MCF 10A (cell line): ENCODE measurements at regions of chr10 and their contacts with region 1.

Region 1: DNA sequence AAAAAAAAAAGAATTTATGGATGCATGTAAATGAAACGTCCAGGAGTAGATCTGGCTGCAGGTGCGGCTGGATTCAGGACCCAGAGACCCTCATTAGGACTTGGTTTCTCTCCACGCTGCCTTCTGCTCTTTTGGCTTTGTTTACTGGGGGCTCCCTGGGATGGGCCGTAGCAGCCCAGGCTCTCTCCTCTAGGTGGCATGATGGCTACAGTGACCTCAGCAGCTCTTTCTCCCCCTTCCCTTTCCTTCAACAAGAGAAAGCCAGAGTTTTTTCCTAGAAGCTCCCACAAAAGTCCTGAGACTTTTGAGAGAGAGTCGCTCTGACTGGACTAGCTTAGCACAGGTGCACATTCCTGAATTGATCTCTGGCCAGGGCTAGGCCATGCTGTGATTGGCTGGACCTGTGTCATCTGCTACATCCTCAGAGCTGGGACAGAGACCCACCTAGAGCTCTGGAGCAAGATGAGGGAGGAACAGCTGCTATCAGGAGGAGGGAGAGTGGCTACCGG is 67.8 kb upstream of the PDCD4 start:
- DNase-seq: peak; percentile 61
- H3K4me3 Mint-ChIP-seq: no peak overlapping the region
- H3K27ac Mint-ChIP-seq: no peak overlapping the region
- H3K4me1 Mint-ChIP-seq: peaks cover 32% of the 10 kb centered on the region
- H3K27me3 Mint-ChIP-seq: no peaks in the 10 kb centered on the region
- CTCF ChIP-seq: peak; percentile 49

Region 2: DNA sequence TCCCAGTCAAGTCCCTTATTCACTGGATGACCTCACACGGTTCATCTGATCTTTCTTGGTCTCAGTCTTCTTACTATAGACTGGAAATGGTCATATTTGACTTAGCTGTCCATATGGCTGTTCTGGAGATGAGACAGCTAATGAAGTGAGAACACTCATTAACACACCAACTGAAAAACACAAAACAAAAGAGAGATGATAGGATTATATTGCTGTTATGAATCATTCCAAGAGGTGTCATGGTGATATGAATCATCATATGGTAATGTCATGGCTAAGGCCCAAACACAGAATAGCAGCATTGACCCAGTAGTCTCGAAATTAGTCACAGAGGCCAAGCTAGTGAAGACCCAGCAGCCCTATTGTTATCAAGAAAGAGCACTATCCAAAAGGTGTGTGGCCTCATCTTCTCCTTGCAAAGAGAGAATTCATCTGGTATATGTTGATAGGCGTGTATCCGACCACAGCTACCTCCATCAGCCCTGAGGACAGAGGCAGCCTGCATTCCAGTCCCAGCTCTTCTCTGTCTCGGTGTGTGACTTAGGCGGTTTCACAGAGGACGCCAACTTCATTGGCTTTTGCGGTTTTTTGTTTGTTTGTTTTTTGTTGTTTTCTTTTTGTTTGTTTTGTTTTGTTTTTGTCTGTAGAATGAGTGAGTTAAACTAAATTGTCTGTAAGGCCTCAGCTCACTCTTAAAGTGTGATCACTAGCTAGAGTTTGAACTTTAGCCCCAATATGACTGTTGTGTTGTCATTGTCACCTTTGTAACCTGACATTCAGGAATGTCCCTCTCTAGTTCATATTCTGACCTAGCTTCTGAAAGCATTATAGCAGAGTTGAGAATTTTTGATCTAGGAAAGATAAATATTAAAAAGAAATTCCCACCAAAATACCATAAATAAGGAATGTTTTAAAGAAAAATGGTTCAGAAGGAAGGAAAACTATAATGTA is 29.5 kb before region 1 on chr10:
- CTCF ChIA-PET with region 1: interaction called, 3 read pairs
- POLR2A ChIA-PET with region 1: interaction called, 12 read pairs
- intact Hi-C with region 1: no loop called
- DNase-seq: peak; percentile 89
- H3K4me3 Mint-ChIP-seq: no peak overlapping the region
- H3K27ac Mint-ChIP-seq: peak overlapping the region; percentile 94
- H3K4me1 Mint-ChIP-seq: peaks cover 28% of the 10 kb centered on the region
- H3K27me3 Mint-ChIP-seq: no peaks in the 10 kb centered on the region
- CTCF ChIP-seq: no peak

Region 3: GRCh38 chr10:110852255-110852896 is 48.5 kb after region 1 on chr10:
- CTCF ChIA-PET with region 1: interaction called, 16 read pairs
- POLR2A ChIA-PET with region 1: interaction called, 13 read pairs
- intact Hi-C with region 1: no loop called
- DNase-seq: peak; percentile 86
- H3K4me3 Mint-ChIP-seq: no peak overlapping the region
- H3K27ac Mint-ChIP-seq: peak overlapping the region; percentile 36
- H3K4me1 Mint-ChIP-seq: peaks cover 36% of the 10 kb centered on the region
- H3K27me3 Mint-ChIP-seq: no peaks in the 10 kb centered on the region
- CTCF ChIP-seq: no peak

Region 4: DNA sequence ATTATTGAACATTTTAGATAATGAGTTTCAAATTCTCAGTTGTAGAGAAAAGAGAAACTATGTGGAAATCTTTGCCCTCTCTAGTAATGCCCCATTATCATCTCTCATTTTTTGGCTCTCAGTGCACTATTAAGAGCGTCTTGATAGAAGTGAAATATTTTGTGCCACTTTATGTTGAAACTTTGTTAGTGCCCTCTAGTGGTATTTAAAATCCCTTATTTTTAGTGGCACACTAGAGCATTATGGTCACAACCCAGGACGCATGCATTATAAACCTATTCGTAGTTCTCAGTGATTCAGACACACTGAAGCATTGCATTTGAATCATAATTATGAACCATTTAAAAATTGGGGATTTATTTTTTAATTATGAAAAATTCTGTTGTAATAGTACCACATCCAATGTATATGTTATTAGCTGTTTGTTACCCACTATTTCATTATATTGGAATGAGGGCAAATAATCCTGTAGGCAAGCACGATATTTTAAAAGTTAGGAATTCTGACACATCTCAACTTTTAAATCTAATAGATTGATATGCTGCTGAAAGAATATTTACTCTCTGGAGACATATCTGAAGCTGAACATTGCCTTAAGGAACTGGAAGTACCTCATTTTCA is 89.8 kb after region 1 on chr10:
- CTCF ChIA-PET with region 1: interaction called, 19 read pairs
- POLR2A ChIA-PET with region 1: interaction called, 4 read pairs
- intact Hi-C with region 1: loop called (anchors 1 kb)
- DNase-seq: peak; percentile 54
- H3K4me3 Mint-ChIP-seq: no peak overlapping the region
- H3K27ac Mint-ChIP-seq: no peak overlapping the region
- H3K4me1 Mint-ChIP-seq: peaks cover 16% of the 10 kb centered on the region
- H3K27me3 Mint-ChIP-seq: no peaks in the 10 kb centered on the region
- CTCF ChIP-seq: peak; percentile 52

Region 5: GRCh38 chr10:110918643-110919363 is 114.9 kb after region 1 on chr10 and contains the start of gene BBIP1:
- CTCF ChIA-PET with region 1: no interaction called
- POLR2A ChIA-PET with region 1: interaction called, 10 read pairs
- intact Hi-C with region 1: no loop called
- DNase-seq: peak; percentile 100
- H3K4me3 Mint-ChIP-seq: peak within 1 kb of the TSS; percentile 89
- H3K27ac Mint-ChIP-seq: peak within 1 kb of the TSS; percentile 100
- H3K4me1 Mint-ChIP-seq: peaks cover 22% of the 10 kb centered on the region
- H3K27me3 Mint-ChIP-seq: no peaks in the 10 kb centered on the region
- CTCF ChIP-seq: no peak
- total RNA-seq, gene BBIP1: 46.9 and 68.7 TPM in 2 replicates